Activated B cell treated with CpG ODN at 0.5 μM for 24 hours (primary cell): ENCODE measurements at regions of chr12 and their contacts with region 1.

Region 1: GRCh38 chr12:26126340-26127284 is 1.8 kb upstream of the BHLHE41 start:
- DNase-seq: peak; percentile 71
- ATAC-seq: peak; percentile 45
- H3K4me3 Mint-ChIP-seq: peak overlapping the region; percentile 96
- H3K27ac Mint-ChIP-seq: peak overlapping the region; percentile 96
- H3K4me1 Mint-ChIP-seq: peaks cover 63% of the 10 kb centered on the region
- H3K27me3 Mint-ChIP-seq: no peaks in the 10 kb centered on the region
- CTCF ChIP-seq: no peak

Region 2: GRCh38 chr12:26068503-26068902 is 58.1 kb before region 1 on chr12:
- CTCF ChIA-PET with region 1: no interaction called
- POLR2A ChIA-PET with region 1: no interaction called
- intact Hi-C with region 1: no loop called
- DNase-seq: no peak
- ATAC-seq: no peak
- H3K4me3 Mint-ChIP-seq: no peak overlapping the region
- H3K27ac Mint-ChIP-seq: no peak overlapping the region
- H3K4me1 Mint-ChIP-seq: no peaks in the 10 kb centered on the region
- H3K27me3 Mint-ChIP-seq: peaks cover 1% of the 10 kb centered on the region
- CTCF ChIP-seq: no peak

Region 3: DNA sequence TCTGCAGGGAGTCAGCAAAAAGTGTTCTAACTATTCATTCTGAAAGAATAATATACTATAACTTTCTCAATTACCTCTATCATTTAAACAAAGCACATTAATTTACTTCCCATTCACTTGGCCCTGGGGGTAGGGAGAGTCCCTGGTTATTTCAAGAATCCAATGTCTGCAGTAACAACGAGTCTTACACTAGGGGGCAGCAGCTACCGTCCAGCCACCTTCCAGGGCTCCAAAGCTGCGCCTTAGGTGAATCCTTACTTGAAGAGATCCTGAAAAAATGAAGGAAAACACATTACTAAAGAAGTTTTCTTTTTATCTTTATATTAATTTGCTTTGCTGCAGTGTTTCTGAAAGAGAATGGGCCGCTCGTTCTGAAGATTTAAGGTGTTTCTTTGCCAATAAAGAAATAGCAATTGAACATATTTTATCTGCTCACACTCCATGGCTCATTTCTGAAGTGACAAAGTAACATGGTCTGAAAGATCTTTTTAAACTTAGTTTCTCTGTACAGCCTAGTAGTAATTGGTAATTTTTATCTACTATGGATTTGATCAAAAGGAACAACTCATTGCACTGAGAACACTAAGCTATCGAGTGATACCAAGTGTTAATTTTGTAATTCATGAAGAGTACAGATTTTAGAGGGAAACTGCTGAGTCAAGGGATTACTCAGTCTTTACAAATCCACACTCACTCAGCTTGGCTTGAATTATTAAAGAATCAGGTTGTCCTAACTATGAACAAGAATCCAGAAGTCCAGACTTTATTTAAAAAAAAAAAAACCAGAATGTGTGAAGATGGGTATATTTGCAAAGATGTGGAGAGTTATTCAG is 29.4 kb before region 1 on chr12:
- CTCF ChIA-PET with region 1: interaction called, 11 read pairs
- POLR2A ChIA-PET with region 1: interaction called, 4 read pairs
- intact Hi-C with region 1: no loop called
- DNase-seq: peak; percentile 39
- ATAC-seq: peak; percentile 100
- H3K4me3 Mint-ChIP-seq: no peak overlapping the region
- H3K27ac Mint-ChIP-seq: no peak overlapping the region
- H3K4me1 Mint-ChIP-seq: peaks cover 5% of the 10 kb centered on the region
- H3K27me3 Mint-ChIP-seq: no peaks in the 10 kb centered on the region
- CTCF ChIP-seq: peak; percentile 88

Region 4: GRCh38 chr12:26153421-26154154 is 27.0 kb after region 1 on chr12:
- CTCF ChIA-PET with region 1: interaction called, 74 read pairs
- POLR2A ChIA-PET with region 1: interaction called, 189 read pairs
- intact Hi-C with region 1: loop called (anchors 1 kb)
- DNase-seq: no peak
- ATAC-seq: no peak
- H3K4me3 Mint-ChIP-seq: no peak overlapping the region
- H3K27ac Mint-ChIP-seq: peak overlapping the region; percentile 27
- H3K4me1 Mint-ChIP-seq: peaks cover 77% of the 10 kb centered on the region
- H3K27me3 Mint-ChIP-seq: no peaks in the 10 kb centered on the region
- CTCF ChIP-seq: no peak

Region 5: GRCh38 chr12:26188127-26188526 is 61.5 kb after region 1 on chr12:
- CTCF ChIA-PET with region 1: interaction called, 3 read pairs
- POLR2A ChIA-PET with region 1: interaction called, 5 read pairs
- intact Hi-C with region 1: loop called (anchors 2 kb)
- DNase-seq: no peak
- ATAC-seq: no peak
- H3K4me3 Mint-ChIP-seq: no peak overlapping the region
- H3K27ac Mint-ChIP-seq: no peak overlapping the region
- H3K4me1 Mint-ChIP-seq: peaks cover 22% of the 10 kb centered on the region
- H3K27me3 Mint-ChIP-seq: no peaks in the 10 kb centered on the region
- CTCF ChIP-seq: no peak

Region 6: GRCh38 chr12:26274441-26275312 is 148.1 kb after region 1 on chr12:
- CTCF ChIA-PET with region 1: interaction called, 5 read pairs
- POLR2A ChIA-PET with region 1: interaction called, 4 read pairs
- intact Hi-C with region 1: loop called (anchors 1 kb)
- DNase-seq: peak; percentile 43
- ATAC-seq: peak; percentile 98
- H3K4me3 Mint-ChIP-seq: peak overlapping the region; percentile 28
- H3K27ac Mint-ChIP-seq: peak overlapping the region; percentile 78
- H3K4me1 Mint-ChIP-seq: peaks cover 53% of the 10 kb centered on the region
- H3K27me3 Mint-ChIP-seq: no peaks in the 10 kb centered on the region
- CTCF ChIP-seq: no peak

Region 7: DNA sequence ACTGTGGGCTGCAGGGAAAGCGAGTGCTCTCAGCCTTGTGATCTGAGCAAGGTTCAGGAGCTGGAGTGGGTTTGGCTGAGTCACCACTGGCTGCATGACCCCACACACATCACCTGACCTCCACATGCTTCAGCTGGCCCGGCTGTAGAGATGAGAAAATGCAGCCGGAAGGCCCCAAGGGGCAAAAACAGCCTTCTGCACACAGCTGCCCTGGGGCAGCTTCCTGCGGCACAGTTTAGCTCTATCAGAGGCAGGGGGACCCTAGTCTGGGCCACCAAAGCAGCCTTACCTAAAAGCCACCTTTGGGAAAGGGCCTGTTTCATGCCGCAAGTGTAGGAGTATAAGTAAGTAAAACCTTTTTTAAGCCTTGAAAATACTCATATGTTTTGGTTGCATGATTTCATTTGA is 192.1 kb after region 1 on chr12:
- CTCF ChIA-PET with region 1: interaction called, 6 read pairs
- POLR2A ChIA-PET with region 1: interaction called, 12 read pairs
- intact Hi-C with region 1: no loop called
- DNase-seq: peak; percentile 50
- ATAC-seq: peak; percentile 85
- H3K4me3 Mint-ChIP-seq: peak overlapping the region; percentile 11
- H3K27ac Mint-ChIP-seq: peak overlapping the region; percentile 83
- H3K4me1 Mint-ChIP-seq: peaks cover 39% of the 10 kb centered on the region
- H3K27me3 Mint-ChIP-seq: no peaks in the 10 kb centered on the region
- CTCF ChIP-seq: no peak

Region 8: DNA sequence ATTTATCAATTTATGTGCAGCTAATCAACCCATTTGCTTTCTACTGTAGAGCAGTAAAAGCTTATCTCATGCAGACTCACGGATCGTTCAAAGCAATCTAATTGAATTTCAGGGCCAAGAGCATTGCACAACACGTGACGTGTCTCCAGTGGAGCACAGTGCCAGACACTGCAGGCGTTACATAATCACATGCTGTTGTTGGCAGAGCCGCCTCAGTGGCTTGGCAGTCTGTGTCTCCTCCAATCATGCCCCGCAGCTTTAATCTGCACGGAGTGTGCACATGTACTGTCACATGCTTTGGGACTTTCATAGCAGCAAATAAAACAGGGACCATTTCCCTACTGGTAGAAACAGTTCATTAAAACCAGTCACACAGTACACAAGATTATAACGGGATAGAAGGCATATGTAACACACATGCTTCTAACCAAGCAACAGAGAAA is 397.1 kb after region 1 on chr12:
- CTCF ChIA-PET with region 1: interaction called, 46 read pairs
- POLR2A ChIA-PET with region 1: interaction called, 3 read pairs
- intact Hi-C with region 1: no loop called
- DNase-seq: no peak
- ATAC-seq: no peak
- H3K4me3 Mint-ChIP-seq: no peak overlapping the region
- H3K27ac Mint-ChIP-seq: no peak overlapping the region
- H3K4me1 Mint-ChIP-seq: peaks cover 20% of the 10 kb centered on the region
- H3K27me3 Mint-ChIP-seq: no peaks in the 10 kb centered on the region
- CTCF ChIP-seq: no peak